ENCODE measurements at regions of chr11 and their contacts with region 1.

Region 1: DNA sequence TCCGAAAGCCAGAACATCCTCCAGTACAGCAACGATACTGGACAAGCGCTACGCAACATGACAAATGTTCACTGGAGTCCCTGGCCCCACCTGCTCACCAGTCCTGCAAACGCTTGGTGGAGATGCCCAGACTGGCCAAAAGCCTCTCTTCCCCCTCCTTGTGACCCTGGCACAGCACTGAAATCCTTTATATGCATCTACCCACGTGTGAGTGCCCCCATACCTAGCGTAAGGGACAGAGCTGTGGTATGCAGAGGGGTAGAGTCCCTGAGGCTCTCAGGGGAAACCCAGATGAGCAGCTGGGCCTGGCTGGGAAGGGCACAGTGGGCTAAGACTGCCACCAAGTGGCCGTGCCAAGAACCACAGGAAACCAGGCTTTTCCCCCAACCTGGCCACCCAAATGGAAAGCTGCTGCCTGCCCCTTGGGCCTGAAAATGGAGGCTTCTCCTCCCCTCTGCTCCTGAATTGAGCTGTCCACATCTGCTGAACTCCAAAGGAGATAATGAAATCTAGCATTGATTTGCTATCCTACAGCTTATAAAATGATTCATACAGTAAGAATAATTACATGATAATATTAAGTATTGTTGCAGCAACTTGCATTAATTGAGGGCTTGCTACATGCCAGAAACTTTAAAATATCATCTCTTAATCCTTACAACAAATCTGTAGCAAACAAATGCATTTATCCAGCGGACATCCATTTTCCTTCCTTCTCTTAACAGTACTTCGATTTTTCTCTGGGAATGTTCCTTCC is 24.8 kb upstream of the TTC12 start:
- DNase-seq: peak; percentile 73
- ATAC-seq: peak; percentile 89
- H3K4me3 ChIP-seq: no peak overlapping the region
- H3K27ac ChIP-seq: no peak overlapping the region
- H3K4me1 ChIP-seq: peaks cover 11% of the 10 kb centered on the region
- H3K27me3 ChIP-seq: peaks cover 19% of the 10 kb centered on the region; the same call in 1 of the 2 replicates
- CTCF ChIP-seq: peak; percentile 94

Region 2: GRCh38 chr11:112219476-112220232 is 1070.0 kb before region 1 on chr11:
- CTCF ChIA-PET with region 1: no interaction called
- POLR2A ChIA-PET with region 1: no interaction called
- intact Hi-C with region 1: loop called (anchors 5 kb)
- DNase-seq: peak; percentile 88
- ATAC-seq: peak; percentile 85
- H3K4me3 ChIP-seq: no peak overlapping the region
- H3K27ac ChIP-seq: no peak overlapping the region
- H3K4me1 ChIP-seq: peaks cover 33% of the 10 kb centered on the region
- H3K27me3 ChIP-seq: no peaks in the 10 kb centered on the region
- CTCF ChIP-seq: peak; percentile 91

Region 3: DNA sequence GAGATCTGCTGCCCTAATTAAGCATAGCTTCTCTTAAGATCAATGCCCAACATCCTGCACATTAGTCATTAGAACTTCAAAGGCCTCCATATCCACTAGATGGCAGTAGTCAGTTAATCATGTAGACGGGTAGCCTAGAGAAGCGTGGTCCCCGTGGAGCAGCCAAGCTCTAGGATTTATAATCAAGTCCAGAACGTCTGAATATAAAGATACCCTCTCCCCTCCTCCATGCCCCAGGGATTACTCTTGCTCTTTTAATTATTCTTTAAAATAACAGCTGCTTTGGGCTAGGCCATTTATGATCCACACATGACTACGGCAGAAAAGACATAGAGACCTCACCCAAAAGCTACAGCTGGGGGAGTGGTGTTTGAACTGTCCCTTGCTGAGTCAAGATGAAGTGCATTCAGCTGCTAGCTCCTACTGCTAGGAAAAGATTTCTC is 701.3 kb before region 1 on chr11:
- CTCF ChIA-PET with region 1: interaction called, 9 read pairs
- POLR2A ChIA-PET with region 1: no interaction called
- intact Hi-C with region 1: loop called (anchors 1 kb)
- DNase-seq: peak; percentile 90
- ATAC-seq: peak; percentile 94
- H3K4me3 ChIP-seq: no peak overlapping the region
- H3K27ac ChIP-seq: no peak overlapping the region
- H3K4me1 ChIP-seq: no peaks in the 10 kb centered on the region
- H3K27me3 ChIP-seq: peaks cover 8% of the 10 kb centered on the region; the same call in 1 of the 2 replicates
- CTCF ChIP-seq: peak; percentile 87

Region 4: DNA sequence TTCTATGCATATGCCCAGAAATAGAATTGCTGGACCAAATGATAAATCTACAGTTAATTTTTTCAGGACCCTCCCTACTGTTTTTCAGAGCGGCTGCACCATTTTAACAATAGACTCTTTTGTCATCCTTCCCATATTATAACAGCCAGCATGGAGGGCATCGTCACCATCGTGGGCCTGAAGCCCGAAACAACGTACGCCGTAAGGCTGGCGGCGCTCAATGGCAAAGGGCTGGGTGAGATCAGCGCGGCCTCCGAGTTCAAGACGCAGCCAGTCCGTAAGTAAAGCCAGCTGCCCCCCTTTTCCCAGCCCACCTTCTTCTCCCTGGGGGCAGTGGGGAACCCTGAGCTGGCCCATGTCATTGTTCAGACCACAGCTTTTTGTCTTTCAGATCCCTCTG is 54.7 kb before region 1 on chr11:
- CTCF ChIA-PET with region 1: no interaction called
- POLR2A ChIA-PET with region 1: no interaction called
- intact Hi-C with region 1: no loop called
- DNase-seq: no peak
- ATAC-seq: no peak
- H3K4me3 ChIP-seq: no peak overlapping the region
- H3K27ac ChIP-seq: no peak overlapping the region
- H3K4me1 ChIP-seq: no peaks in the 10 kb centered on the region
- H3K27me3 ChIP-seq: peaks cover 70% of the 10 kb centered on the region
- CTCF ChIP-seq: no peak